Activated T-helper 2 cell treated with anti-CD3 and anti-CD28 coated beads, Interferon-gamma antibody, Interleukin-2, Interleukin-4, amounts not matched to agents 10 μg/mL and 5 μg/mL and 100 μg/mL, durations not matched to agents 14 hours and 24 hours and 36 hours (primary cell): ENCODE measurements at regions of chr3 and their contacts with region 1.

Region 1: GRCh38 chr3:47164007-47164881 is at the start of gene SETD2:
- DNase-seq: peak; percentile 81
- H3K4me3 Mint-ChIP-seq: peak within 1 kb of the TSS; percentile 99
- H3K27ac Mint-ChIP-seq: peak within 1 kb of the TSS; percentile 99
- H3K4me1 Mint-ChIP-seq: peaks cover 35% of the 10 kb centered on the region
- H3K27me3 Mint-ChIP-seq: no peaks in the 10 kb centered on the region
- total RNA-seq, gene SETD2: 41.2 and 43.6 TPM in 2 replicates

Region 2: GRCh38 chr3:46517016-46517793 is 647.0 kb before region 1 on chr3:
- intact Hi-C with region 1: no loop called
- DNase-seq: no peak
- H3K4me3 Mint-ChIP-seq: no peak overlapping the region
- H3K27ac Mint-ChIP-seq: no peak overlapping the region
- H3K4me1 Mint-ChIP-seq: peaks cover 3% of the 10 kb centered on the region
- H3K27me3 Mint-ChIP-seq: peaks cover 22% of the 10 kb centered on the region

Region 3: DNA sequence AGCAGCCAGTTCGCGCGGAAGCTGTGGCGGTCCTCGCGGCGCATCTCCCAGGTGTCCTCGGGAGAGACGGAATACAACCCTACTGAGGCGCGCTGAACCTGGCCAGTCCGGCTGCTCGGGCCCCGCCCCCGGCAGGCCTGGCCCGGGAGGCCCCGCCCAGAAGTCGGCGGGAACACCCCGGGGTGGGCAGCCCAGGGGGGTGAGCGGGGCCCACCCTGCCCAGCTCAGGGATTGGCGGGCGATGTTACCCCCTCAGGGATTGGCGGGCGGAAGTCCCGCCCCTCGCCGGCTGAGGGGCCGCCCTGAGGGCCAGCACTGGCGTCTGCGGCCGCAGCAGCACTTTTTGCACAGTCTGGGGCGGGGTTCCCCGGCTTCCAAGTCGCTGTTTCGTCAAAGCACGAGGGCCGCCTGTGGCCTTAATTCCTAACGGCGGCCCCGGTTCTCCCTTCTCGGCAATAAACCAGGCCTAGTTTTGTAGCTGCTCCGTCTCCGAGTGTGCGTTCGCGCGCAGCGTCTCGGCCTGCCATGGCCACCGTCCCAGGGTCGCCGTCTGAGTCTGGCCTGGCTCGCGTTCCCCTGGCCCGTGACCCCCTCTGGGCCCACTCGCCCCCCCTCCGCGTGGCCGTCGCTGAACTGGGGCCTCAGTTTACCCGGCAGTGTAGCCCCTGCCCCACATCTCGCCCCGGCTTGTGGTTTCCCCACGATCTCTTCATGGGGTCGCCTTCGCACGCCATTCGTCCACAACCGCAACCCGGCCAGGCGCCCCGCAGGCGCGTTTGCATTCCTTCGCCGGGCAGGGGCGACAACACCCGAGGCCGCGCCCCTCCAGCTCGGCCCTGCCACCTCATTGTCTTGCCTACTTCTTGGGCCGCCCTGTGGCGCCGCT is 154.8 kb before region 1 on chr3:
- intact Hi-C with region 1: loop called (anchors 10 kb)
- DNase-seq: peak; percentile 50
- H3K4me3 Mint-ChIP-seq: no peak overlapping the region
- H3K27ac Mint-ChIP-seq: peak overlapping the region; percentile 8
- H3K4me1 Mint-ChIP-seq: no peaks in the 10 kb centered on the region
- H3K27me3 Mint-ChIP-seq: no peaks in the 10 kb centered on the region

Region 4: DNA sequence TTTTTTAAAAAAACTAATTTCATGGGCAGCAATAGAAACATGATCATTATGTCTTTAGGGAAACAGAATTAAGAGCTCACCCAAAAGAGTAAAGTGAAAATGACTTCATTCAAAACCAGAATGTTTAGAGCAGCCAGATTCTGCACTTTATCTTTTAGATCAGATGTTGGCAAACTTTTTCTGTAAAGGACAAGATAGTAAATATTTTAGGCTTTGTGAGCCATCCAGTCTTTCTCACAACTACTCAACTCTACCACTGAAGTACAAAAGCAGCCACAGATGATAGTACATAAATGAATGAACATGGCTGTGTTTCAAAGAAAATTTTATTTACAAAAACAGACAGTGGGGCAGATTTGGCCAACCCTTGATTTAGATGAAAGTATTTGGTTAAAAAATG is 84.8 kb before region 1 on chr3:
- intact Hi-C with region 1: loop called (anchors 5 kb)
- DNase-seq: no peak
- H3K4me3 Mint-ChIP-seq: no peak overlapping the region
- H3K27ac Mint-ChIP-seq: peak overlapping the region; percentile 9
- H3K4me1 Mint-ChIP-seq: peaks cover 28% of the 10 kb centered on the region
- H3K27me3 Mint-ChIP-seq: no peaks in the 10 kb centered on the region

Region 5: GRCh38 chr3:47324278-47324865 is 160.1 kb after region 1 on chr3:
- intact Hi-C with region 1: no loop called
- DNase-seq: peak; percentile 36
- H3K4me3 Mint-ChIP-seq: no peak overlapping the region
- H3K27ac Mint-ChIP-seq: no peak overlapping the region
- H3K4me1 Mint-ChIP-seq: peaks cover 3% of the 10 kb centered on the region
- H3K27me3 Mint-ChIP-seq: no peaks in the 10 kb centered on the region

Region 6: DNA sequence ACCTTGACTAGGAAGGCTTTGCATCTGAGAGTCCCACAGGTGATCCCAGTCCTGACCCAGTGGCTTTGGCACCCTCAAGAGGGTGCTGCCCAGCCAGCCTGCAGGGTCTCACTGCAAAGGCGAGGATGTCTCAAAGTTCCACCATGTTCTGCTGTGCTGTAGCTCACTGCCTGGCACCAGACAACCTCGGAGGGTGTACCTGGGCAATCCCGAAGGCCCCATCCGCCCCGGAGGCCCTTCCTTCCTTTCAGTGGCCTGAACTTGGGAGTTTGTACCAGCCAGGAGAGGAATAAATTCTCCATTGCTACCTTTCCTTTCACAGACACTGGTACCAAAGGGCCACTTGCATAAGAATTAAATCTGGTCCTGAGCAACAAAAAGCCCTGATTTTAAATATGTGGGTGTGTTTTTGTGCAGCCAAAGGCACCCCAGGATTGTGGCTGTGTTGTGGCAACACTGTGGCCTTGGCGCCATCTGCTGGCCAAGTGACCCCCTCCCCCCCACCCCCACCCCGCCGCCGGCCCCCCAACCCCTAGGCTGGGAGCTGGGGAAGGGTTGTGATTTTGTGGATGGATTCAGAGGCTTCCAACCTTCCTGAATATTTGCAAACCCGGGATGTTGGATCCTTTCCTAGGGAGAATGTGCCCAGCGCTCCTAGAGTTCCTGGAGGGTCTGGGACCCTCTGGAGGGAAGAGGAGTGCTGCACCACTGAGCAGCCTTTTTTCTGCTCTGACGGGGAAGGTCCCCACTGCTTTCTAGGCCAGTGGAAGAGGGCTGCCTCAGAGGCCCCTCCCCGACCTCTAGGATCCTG is 206.8 kb after region 1 on chr3:
- intact Hi-C with region 1: loop called (anchors 10 kb)
- DNase-seq: no peak
- H3K4me3 Mint-ChIP-seq: no peak overlapping the region
- H3K27ac Mint-ChIP-seq: no peak overlapping the region
- H3K4me1 Mint-ChIP-seq: no peaks in the 10 kb centered on the region
- H3K27me3 Mint-ChIP-seq: peaks cover 7% of the 10 kb centered on the region

Region 7: DNA sequence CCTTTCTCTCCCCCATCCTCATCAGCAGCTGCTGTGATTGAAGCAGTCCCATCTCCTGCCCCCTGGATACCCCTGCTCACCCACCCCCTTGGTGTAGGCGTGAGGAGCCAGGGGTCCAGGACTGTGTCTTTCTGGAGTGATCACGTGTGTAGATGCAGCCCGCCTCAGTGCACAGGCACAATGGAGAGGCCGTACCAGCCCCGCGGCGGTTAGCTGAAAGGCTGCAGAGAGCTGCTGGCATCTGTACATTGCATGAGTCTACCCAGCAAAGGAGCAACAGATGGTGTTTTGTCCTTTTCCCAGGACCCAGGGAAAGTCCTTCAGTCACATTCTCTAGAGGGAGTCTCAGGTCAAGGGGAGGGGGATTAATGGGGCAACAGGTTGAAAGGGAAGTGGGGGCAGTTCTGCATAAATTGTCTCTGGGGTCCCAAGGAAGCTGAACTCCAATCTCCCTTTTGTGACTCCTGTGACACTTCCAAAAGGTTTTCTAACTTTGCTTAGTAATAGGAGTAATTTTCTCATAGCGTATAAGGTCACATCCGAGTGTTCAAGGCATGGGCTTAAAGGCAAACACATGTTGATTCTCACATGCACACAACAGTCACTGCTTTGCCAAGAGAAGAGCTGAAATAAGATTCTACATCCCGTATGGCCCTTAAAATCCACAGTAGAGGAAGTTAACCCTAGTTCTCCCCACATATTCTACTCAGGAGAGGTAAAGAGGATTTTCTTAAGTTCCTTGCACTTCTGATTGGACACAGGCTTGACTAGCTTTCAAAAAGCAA is 407.3 kb after region 1 on chr3:
- intact Hi-C with region 1: no loop called
- DNase-seq: no peak
- H3K4me3 Mint-ChIP-seq: no peak overlapping the region
- H3K27ac Mint-ChIP-seq: no peak overlapping the region
- H3K4me1 Mint-ChIP-seq: no peaks in the 10 kb centered on the region
- H3K27me3 Mint-ChIP-seq: peaks cover 20% of the 10 kb centered on the region